Activated CD4-positive, alpha-beta memory T cell treated with anti-CD3 and anti-CD28 coated beads for 36 hours (primary cell): ENCODE measurements at regions of chr17 and their contacts with region 1.

Region 1: DNA sequence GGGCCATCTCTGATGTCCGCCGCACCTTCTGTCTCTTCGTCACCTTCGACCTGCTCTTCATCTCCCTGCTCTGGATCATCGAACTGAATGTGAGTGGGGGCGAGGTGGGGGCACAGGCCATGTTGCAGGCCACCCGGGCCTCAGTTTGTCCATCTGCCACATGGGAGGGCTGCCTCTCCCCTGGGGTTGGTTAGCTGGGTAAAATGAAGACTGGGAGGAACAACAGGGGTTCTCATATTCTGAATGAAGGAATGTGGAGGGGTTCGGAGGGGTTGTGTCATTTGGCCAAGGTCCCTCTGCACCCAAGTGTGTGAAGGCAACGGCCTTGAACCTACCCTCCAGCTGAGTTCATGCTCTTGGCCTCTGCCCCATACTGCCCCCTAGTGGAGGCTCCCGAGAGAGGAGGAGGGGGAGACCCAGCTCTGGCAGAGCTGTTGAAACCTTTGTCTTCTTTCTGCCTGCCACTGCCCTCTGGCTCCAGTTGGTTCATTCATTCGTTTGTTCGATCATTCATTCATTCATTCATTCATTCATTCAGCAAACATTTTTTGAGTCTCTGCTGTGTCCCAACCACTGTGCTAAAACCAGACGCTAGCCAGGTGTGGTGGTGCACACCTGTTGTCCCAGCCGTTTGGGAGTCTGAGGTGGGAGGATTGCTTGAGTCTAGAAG is 11.4 kb upstream of the TCAP start:
- DNase-seq: peak; percentile 88
- H3K4me3 Mint-ChIP-seq: no peak overlapping the region
- H3K27ac Mint-ChIP-seq: no peak overlapping the region
- H3K4me1 Mint-ChIP-seq: peaks cover 7% of the 10 kb centered on the region
- H3K27me3 Mint-ChIP-seq: no peaks in the 10 kb centered on the region

Region 2: GRCh38 chr17:39636927-39637736 is 16.7 kb before region 1 on chr17 and contains the start of gene STARD3:
- CTCF ChIA-PET with region 1: interaction called, 39 read pairs
- POLR2A ChIA-PET with region 1: no interaction called
- intact Hi-C with region 1: no loop called
- DNase-seq: peak; percentile 95
- H3K4me3 Mint-ChIP-seq: peak within 1 kb of the TSS; percentile 88
- H3K27ac Mint-ChIP-seq: peak within 1 kb of the TSS; percentile 83
- H3K4me1 Mint-ChIP-seq: peaks cover 51% of the 10 kb centered on the region
- H3K27me3 Mint-ChIP-seq: no peaks in the 10 kb centered on the region
- total RNA-seq, gene STARD3: 53.6 to 60.3 TPM

Region 3: DNA sequence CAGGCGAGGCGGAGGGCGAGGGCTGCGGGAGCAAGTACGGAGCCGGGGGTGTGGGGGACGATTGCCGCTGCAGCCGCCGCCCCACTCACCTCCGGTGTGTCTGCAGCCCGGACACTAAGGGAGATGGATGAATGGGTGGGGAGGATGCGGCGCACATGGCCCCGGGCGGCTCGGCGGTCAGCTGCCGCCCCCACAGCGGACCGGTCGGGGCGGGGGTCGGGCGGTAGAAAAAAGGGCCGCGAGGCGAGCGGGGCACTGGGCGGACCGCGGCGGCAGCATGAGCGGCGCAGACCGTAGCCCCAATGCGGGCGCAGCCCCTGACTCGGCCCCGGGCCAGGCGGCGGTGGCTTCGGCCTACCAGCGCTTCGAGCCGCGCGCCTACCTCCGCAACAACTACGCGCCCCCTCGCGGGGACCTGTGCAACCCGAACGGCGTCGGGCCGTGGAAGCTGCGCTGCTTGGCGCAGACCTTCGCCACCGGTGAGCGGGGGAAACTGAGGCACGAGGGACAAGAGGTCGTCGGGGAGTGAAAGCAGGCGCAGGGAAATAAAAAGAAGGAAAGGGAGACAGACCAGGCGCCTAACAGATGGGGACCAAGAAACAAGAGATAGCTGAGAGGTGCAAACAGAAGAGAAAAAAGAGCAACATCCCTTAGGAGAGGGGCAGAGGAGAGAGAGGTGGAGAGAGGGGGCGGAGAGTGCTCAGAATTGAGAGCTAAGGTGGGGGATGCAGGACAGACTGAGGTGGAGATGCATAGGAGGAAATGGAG is 14.6 kb after region 1 on chr17 and contains the start of gene PNMT:
- CTCF ChIA-PET with region 1: interaction called, 18 read pairs
- POLR2A ChIA-PET with region 1: interaction called, 4 read pairs
- intact Hi-C with region 1: no loop called
- DNase-seq: peak; percentile 76
- H3K4me3 Mint-ChIP-seq: peak within 1 kb of the TSS; percentile 35
- H3K27ac Mint-ChIP-seq: no peak within 1 kb of the TSS
- H3K4me1 Mint-ChIP-seq: peaks cover 11% of the 10 kb centered on the region
- H3K27me3 Mint-ChIP-seq: peaks cover 25% of the 10 kb centered on the region
- total RNA-seq, gene PNMT: not detected

Region 4: GRCh38 chr17:39676198-39676819 is 22.5 kb after region 1 on chr17:
- CTCF ChIA-PET with region 1: interaction called, 19 read pairs
- POLR2A ChIA-PET with region 1: no interaction called
- intact Hi-C with region 1: loop called (anchors 2 kb)
- DNase-seq: peak; percentile 67
- H3K4me3 Mint-ChIP-seq: no peak overlapping the region
- H3K27ac Mint-ChIP-seq: peak overlapping the region; percentile 19
- H3K4me1 Mint-ChIP-seq: peaks cover 61% of the 10 kb centered on the region
- H3K27me3 Mint-ChIP-seq: peaks cover 2% of the 10 kb centered on the region

Region 5: DNA sequence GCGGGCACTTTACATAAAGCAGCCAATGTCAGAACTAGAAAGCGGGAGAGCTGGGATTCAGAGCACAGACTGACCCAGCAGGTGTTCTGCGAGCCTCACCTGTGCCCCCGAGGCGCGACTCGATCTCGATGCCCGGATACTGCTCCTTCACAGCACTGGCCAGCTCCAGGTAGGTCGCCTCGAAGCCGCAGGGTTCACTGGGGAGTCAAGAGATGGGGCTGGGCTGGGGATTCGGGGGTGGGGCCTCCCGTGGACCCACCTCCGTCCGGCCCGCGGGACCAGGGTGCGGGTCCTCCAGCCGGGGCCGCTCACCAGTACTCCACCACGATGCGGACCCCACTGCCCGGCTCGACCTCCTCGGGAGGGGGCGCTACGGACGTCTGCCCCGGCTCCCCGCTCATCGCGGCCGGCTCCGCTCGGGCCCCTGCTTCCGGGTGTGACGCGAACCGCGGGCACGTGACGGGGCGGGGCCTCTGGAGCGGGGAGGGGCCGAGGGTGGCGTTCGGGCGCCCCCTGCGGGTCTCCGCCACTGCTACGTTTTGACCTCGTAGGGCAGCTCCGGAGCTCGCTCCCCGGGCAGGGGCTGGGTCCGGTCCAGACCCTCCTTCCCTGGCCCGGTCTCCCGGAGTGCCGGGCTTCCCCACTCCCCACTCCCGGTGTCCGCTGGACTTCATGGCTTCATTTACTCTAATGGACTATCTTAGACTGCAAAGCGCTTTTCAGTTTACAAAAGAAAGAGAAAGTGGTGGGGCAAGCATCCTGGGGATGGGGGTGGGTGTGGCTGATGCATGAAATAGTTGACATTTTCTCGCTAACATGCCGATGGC is 76.5 kb after region 1 on chr17 and contains the start of gene MIEN1:
- CTCF ChIA-PET with region 1: interaction called, 16 read pairs
- POLR2A ChIA-PET with region 1: no interaction called
- intact Hi-C with region 1: no loop called
- DNase-seq: peak; percentile 95
- H3K4me3 Mint-ChIP-seq: peak within 1 kb of the TSS; percentile 88
- H3K27ac Mint-ChIP-seq: peak within 1 kb of the TSS; percentile 73
- H3K4me1 Mint-ChIP-seq: peaks cover 12% of the 10 kb centered on the region
- H3K27me3 Mint-ChIP-seq: no peaks in the 10 kb centered on the region
- total RNA-seq, gene MIEN1: 41.0 to 43.8 TPM

Region 6: GRCh38 chr17:40139566-40140058 is 485.8 kb after region 1 on chr17:
- CTCF ChIA-PET with region 1: no interaction called
- POLR2A ChIA-PET with region 1: no interaction called
- intact Hi-C with region 1: no loop called
- DNase-seq: no peak
- H3K4me3 Mint-ChIP-seq: peak overlapping the region; percentile 86
- H3K27ac Mint-ChIP-seq: peak overlapping the region; percentile 98
- H3K4me1 Mint-ChIP-seq: peaks cover 28% of the 10 kb centered on the region
- H3K27me3 Mint-ChIP-seq: no peaks in the 10 kb centered on the region